Activated CD4-positive, alpha-beta memory T cell treated with anti-CD3 and anti-CD28 coated beads for 36 hours (primary cell): ENCODE measurements at regions of chr10 and their contacts with region 1.

Region 1: GRCh38 chr10:63227207-63227915 is 94.2 kb downstream of the NRBF2 start:
- DNase-seq: no peak
- H3K4me3 Mint-ChIP-seq: peak overlapping the region; percentile 47
- H3K27ac Mint-ChIP-seq: peak overlapping the region; percentile 80
- H3K4me1 Mint-ChIP-seq: peaks cover 50% of the 10 kb centered on the region
- H3K27me3 Mint-ChIP-seq: no peaks in the 10 kb centered on the region

Region 2: DNA sequence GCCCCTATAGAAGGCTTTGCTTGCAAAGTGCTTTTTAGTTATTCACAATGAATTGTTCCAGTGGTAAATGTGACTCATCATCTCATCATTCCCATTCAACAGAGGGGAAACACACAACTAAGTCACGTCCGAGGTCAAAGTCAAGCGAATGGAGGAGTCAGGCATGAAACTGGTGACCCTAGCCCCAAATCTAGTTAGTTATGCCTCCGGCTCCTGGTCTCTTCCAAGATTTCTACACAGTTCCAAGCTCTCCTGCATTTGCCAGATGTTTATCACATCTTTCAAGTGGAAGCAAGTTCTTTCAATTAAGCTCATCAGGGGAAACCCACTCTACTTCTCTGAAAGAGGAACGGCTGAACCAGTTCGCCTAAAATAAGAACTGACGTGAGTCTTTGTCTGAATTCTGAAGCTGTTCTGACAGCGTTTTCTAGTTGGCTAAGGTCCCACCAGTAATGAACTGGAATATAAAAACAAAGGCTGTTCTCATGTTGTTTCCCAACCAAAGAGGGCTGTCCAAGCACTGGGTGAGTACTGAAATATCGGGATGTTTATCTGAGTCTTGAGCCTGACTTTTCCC is 235.1 kb before region 1 on chr10:
- CTCF ChIA-PET with region 1: no interaction called
- POLR2A ChIA-PET with region 1: no interaction called
- intact Hi-C with region 1: loop called (anchors 5 kb)
- DNase-seq: peak; percentile 20
- H3K4me3 Mint-ChIP-seq: peak overlapping the region; percentile 24
- H3K27ac Mint-ChIP-seq: peak overlapping the region; percentile 84
- H3K4me1 Mint-ChIP-seq: peaks cover 54% of the 10 kb centered on the region
- H3K27me3 Mint-ChIP-seq: peaks cover 7% of the 10 kb centered on the region

Region 3: DNA sequence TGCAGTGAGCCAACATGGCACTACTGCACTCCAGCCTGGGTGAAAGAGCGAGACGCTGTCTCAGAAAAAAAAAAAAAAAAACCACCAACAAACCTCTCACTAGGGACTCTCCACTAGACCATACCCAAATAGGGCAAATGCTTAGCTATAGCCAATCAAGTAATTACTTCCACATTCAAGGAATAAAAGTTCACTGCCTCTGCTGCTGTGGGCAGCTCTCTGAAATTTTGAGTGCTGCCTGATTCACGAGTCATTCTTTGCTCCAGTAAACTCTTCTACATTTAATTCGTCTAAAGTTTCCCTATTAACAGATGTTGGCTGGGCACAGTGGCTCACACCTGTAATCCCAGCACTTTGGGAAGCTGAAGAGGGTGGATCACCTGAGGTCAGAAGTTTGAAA is 98.9 kb before region 1 on chr10:
- CTCF ChIA-PET with region 1: no interaction called
- POLR2A ChIA-PET with region 1: no interaction called
- intact Hi-C with region 1: no loop called
- DNase-seq: no peak
- H3K4me3 Mint-ChIP-seq: no peak overlapping the region
- H3K27ac Mint-ChIP-seq: no peak overlapping the region
- H3K4me1 Mint-ChIP-seq: peaks cover 6% of the 10 kb centered on the region
- H3K27me3 Mint-ChIP-seq: peaks cover 6% of the 10 kb centered on the region

Region 4: DNA sequence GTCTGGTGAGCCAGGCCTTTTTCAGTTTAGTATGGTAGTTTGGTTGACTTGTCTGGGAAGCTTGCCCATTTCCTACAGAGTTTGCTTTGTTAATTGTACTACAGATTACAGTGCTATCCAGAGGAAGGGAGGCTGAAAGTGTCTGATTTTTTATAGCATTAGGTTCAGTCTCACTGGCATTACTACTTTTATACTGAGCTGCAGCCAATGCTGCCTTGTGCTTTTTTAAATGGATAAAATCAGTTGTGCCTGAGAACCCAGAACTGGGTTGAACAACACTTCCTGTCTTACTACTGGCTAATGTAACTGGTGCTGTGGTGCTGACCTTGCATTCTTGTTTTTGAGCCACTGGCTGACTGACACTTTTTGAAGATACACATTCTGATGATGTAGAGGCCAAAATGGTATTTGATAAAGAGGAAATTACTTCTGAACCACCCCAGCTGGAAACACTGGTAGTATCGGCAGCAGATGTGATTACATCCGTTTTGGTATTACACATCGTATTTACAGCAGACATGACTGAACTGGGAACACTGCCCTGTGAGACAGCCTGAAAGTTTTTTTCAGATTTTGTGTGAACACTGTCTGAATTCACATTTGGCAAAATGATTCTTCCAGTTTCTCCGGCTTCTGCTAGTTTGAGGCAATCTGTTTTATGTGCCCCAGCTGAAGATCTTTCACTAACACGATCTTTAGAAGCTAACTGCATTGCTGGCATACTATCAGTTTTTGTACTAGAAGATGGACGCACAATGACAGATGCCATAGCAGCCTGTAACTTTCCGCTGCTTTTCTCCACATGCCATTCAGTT is 20.2 kb before region 1 on chr10:
- CTCF ChIA-PET with region 1: no interaction called
- POLR2A ChIA-PET with region 1: no interaction called
- intact Hi-C with region 1: loop called (anchors 2 kb)
- DNase-seq: peak; percentile 20
- H3K4me3 Mint-ChIP-seq: no peak overlapping the region
- H3K27ac Mint-ChIP-seq: peak overlapping the region; percentile 56
- H3K4me1 Mint-ChIP-seq: peaks cover 60% of the 10 kb centered on the region
- H3K27me3 Mint-ChIP-seq: no peaks in the 10 kb centered on the region

Region 5: GRCh38 chr10:63217120-63217605 is 10.2 kb before region 1 on chr10:
- CTCF ChIA-PET with region 1: interaction called, 37 read pairs
- POLR2A ChIA-PET with region 1: no interaction called
- intact Hi-C with region 1: loop called (anchors 1 kb)
- DNase-seq: no peak
- H3K4me3 Mint-ChIP-seq: no peak overlapping the region
- H3K27ac Mint-ChIP-seq: peak overlapping the region; percentile 42
- H3K4me1 Mint-ChIP-seq: peaks cover 55% of the 10 kb centered on the region
- H3K27me3 Mint-ChIP-seq: no peaks in the 10 kb centered on the region

Region 6: DNA sequence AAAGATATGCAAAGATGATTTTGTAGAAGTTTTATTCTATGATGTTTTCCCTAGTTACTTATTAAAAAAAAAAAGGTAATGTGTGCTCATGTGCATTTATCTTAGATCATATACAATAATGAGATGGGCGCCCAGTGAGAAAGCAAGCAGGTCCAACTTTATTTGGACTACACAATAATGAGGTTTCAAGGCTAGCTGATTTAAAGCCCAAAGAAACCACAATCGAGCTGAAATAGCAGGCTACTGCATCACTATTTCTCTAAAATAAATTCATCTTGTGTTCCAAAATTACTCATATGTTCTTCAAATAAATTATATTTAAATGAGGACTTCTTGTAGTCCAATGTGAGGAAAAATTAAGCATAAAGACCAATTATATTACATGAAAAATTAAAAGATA is 128.3 kb after region 1 on chr10:
- CTCF ChIA-PET with region 1: no interaction called
- POLR2A ChIA-PET with region 1: no interaction called
- intact Hi-C with region 1: loop called (anchors 2 kb)
- DNase-seq: no peak
- H3K4me3 Mint-ChIP-seq: no peak overlapping the region
- H3K27ac Mint-ChIP-seq: no peak overlapping the region
- H3K4me1 Mint-ChIP-seq: peaks cover 25% of the 10 kb centered on the region
- H3K27me3 Mint-ChIP-seq: no peaks in the 10 kb centered on the region

Region 7: DNA sequence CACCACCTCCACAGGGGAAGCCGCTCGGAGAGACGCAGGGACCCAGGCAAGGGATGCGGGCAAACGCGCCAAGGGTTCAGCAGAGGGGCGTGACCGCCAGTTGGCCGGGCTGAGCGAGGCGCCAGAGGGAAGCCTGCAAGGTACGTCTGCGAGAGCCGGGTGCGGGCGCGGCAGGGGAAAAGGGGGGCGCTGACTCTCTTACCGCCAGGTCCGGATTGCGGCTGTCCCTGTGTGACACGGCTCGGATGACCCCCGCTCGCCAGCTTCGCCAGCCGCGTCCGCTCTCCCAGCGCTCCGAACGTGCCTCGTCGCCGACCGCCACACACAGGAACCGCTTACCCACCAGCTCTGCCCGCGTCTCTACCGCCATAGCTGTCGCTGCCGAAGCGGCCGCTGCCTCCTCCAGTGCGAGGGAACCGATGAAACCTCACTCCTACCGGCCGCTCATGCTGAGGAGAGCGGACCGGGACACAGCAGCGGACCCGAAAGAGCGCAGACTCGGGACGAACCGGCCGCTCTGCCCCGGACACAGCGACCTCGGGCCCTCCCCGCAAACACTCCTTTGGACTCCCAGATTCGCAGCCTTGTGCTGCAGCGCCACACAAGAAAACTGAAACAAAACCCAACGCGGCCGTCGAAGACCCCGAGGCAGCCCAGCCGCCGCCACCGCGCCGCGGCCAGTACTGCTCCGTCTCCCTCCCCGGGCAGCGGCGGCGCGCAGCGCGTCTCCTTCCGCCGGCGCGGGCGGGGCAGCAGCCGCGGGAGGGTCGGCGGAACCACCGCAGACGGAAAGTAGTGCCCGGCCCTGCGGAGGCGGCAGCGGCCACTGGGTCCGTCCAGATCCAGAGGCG is 238.2 kb after region 1 on chr10 and contains the start of gene JMJD1C:
- CTCF ChIA-PET with region 1: no interaction called
- POLR2A ChIA-PET with region 1: no interaction called
- intact Hi-C with region 1: loop called (anchors 5 kb)
- DNase-seq: peak; percentile 69
- H3K4me3 Mint-ChIP-seq: peak within 1 kb of the TSS; percentile 91
- H3K27ac Mint-ChIP-seq: peak within 1 kb of the TSS; percentile 58
- H3K4me1 Mint-ChIP-seq: peaks cover 18% of the 10 kb centered on the region
- H3K27me3 Mint-ChIP-seq: no peaks in the 10 kb centered on the region
- total RNA-seq, gene JMJD1C: 42.6 to 47.3 TPM

Region 8: GRCh38 chr10:63521416-63522276 is 294.3 kb after region 1 on chr10:
- CTCF ChIA-PET with region 1: no interaction called
- POLR2A ChIA-PET with region 1: no interaction called
- intact Hi-C with region 1: loop called (anchors 5 kb)
- DNase-seq: peak; percentile 64
- H3K4me3 Mint-ChIP-seq: peak overlapping the region; percentile 87
- H3K27ac Mint-ChIP-seq: peak overlapping the region; percentile 92
- H3K4me1 Mint-ChIP-seq: peaks cover 63% of the 10 kb centered on the region
- H3K27me3 Mint-ChIP-seq: no peaks in the 10 kb centered on the region

Region 9: DNA sequence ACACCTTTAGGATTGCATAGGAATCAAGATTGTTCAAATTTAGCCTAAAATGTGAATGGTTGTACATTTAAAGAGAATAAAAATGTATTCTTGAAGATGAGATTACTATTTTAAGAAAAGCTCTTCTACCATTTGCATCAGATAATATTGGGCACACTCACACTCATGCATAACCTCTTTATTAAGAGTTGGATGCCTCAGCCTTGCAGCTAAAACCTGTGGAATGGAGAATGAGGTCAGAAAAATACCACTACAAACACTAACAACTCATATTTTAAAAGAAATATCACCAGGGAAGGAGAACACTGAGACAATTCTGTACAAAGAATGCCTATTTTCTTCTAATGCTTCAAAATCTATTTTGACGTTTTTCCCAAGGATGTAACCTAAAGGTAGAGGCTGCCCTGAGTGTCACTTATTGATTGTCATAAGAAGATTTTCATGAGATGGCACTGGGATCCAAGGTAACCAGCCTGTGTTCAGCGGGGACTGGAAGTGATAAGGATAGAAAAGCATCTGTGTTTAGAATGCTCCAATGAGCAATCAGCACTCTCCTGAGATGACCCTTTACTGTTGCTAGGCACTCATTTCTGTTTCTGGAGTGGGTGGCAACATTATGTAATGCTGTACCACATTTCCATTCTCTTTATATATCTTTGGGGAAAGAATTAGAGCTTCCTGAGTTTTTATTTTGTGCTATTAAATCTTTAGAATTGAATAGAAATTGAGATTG is 320.4 kb after region 1 on chr10:
- CTCF ChIA-PET with region 1: no interaction called
- POLR2A ChIA-PET with region 1: no interaction called
- intact Hi-C with region 1: no loop called
- DNase-seq: no peak
- H3K4me3 Mint-ChIP-seq: no peak overlapping the region
- H3K27ac Mint-ChIP-seq: no peak overlapping the region
- H3K4me1 Mint-ChIP-seq: peaks cover 20% of the 10 kb centered on the region
- H3K27me3 Mint-ChIP-seq: no peaks in the 10 kb centered on the region